ENCODE measurements at regions of chr17 and their contacts with region 1.

Region 1: GRCh38 chr17:63827002-63827771 is at the starts of genes FTSJ3 and PSMC5:
- DNase-seq: peak; percentile 97
- ATAC-seq: peak; percentile 89 to 93
- H3K4me3 ChIP-seq: peak within 1 kb of the TSS; percentile 74
- H3K27ac ChIP-seq: peak within 1 kb of the TSS; percentile 94 to 96
- H3K4me1 ChIP-seq: peaks cover 22% of the 10 kb centered on the region
- CTCF ChIP-seq: peak; percentile 49
- EP300 ChIP-seq: no peak
- POLR2A ChIP-seq: peak; percentile 94
- RAD21 ChIP-seq: no peak
- polyA plus RNA-seq, gene FTSJ3: 62.6 and 74.5 TPM in 2 replicates
- polyA plus RNA-seq, gene PSMC5: 222 and 303 TPM in 2 replicates

Region 2: GRCh38 chr17:63842540-63843386 is 15.6 kb after region 1 on chr17 and contains the start of gene SMARCD2:
- CTCF ChIA-PET with region 1: interaction called, 37 read pairs
- POLR2A ChIA-PET with region 1: interaction called, 6 read pairs
- DNase-seq: peak; percentile 90 to 100
- ATAC-seq: peak; percentile 80 to 90
- H3K4me3 ChIP-seq: peak within 1 kb of the TSS; percentile 89
- H3K27ac ChIP-seq: peak within 1 kb of the TSS; percentile 94 to 97
- H3K4me1 ChIP-seq: peaks cover 32% of the 10 kb centered on the region
- CTCF ChIP-seq: no peak
- EP300 ChIP-seq: peak in 1 of 2 experiments; percentile 18; a peak in 1 of 5 replicates
- POLR2A ChIP-seq: peak; percentile 36; the same call in 1 of the 2 replicates
- RAD21 ChIP-seq: no peak
- polyA plus RNA-seq, gene SMARCD2: 52.7 and 61.9 TPM in 2 replicates

Region 3: DNA sequence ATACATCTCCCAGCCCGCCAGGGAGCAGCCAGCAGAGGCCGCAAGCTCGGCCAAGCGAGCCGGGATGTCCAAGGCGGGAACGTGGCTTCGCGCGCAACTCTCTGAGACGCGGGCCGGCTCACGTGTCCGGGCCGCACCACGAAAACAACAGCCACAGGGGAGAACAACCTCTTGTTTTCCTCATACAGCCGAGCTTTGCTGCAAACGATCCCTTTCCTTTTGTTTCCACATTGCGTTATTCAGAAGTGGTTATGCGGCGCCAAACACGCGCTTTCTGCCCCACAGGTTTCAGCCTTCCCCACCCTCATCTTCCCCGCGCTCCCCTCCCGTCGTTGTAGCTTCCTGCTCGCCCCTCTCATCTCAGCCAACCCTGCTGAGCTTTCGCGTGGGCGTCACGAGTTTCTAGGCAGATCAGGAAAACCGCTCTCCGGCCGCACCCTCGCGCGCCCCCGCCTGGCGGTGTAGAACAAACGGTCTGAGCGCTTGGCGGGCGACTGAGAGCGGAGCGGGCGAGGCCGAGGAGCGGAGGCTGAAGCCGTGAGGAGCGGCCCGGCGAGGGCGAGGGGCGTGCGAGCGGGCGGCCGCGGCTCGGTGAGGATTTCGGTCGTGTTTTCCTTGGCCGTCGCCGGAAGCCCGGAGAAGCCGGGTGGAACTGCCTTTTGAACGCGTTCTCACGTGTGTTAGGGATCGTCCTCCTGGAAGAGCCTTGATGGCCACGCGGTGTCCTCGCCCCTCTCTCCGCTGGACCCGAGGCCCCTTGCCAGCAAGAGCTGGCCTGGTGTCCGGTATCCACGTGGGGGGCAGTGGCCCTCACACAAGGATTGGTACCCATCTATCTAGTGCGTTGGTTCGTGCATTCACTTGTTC is 21.9 kb after region 1 on chr17:
- CTCF ChIA-PET with region 1: interaction called, 16 read pairs
- POLR2A ChIA-PET with region 1: interaction called, 3 read pairs
- DNase-seq: peak; percentile 99
- ATAC-seq: peak; percentile 94 to 96
- H3K4me3 ChIP-seq: peak overlapping the region; percentile 28
- H3K27ac ChIP-seq: peak overlapping the region; percentile 74 to 86
- H3K4me1 ChIP-seq: no peaks in the 10 kb centered on the region
- CTCF ChIP-seq: peak; percentile 88
- EP300 ChIP-seq: no peak
- POLR2A ChIP-seq: no peak
- RAD21 ChIP-seq: no peak

Region 4: GRCh38 chr17:63859257-63859656 is 32.1 kb after region 1 on chr17:
- CTCF ChIA-PET with region 1: no interaction called
- POLR2A ChIA-PET with region 1: no interaction called
- DNase-seq: no peak
- ATAC-seq: no peak
- H3K4me3 ChIP-seq: no peak overlapping the region
- H3K27ac ChIP-seq: no peak overlapping the region
- H3K4me1 ChIP-seq: no peaks in the 10 kb centered on the region
- CTCF ChIP-seq: no peak
- EP300 ChIP-seq: no peak
- POLR2A ChIP-seq: no peak
- RAD21 ChIP-seq: no peak

Measured in A549 (cell line).